ENCODE measurements at regions of chr9 and their contacts with region 1.

Region 1: GRCh38 chr9:112174218-112174964 is 706 bp downstream of the SUSD1 start:
- DNase-seq: peak; percentile 89
- H3K4me3 Mint-ChIP-seq: peak overlapping the region; percentile 86
- H3K27ac Mint-ChIP-seq: peak overlapping the region; percentile 98
- H3K4me1 Mint-ChIP-seq: peaks cover 82% of the 10 kb centered on the region
- H3K27me3 Mint-ChIP-seq: peaks cover 7% of the 10 kb centered on the region

Region 2: DNA sequence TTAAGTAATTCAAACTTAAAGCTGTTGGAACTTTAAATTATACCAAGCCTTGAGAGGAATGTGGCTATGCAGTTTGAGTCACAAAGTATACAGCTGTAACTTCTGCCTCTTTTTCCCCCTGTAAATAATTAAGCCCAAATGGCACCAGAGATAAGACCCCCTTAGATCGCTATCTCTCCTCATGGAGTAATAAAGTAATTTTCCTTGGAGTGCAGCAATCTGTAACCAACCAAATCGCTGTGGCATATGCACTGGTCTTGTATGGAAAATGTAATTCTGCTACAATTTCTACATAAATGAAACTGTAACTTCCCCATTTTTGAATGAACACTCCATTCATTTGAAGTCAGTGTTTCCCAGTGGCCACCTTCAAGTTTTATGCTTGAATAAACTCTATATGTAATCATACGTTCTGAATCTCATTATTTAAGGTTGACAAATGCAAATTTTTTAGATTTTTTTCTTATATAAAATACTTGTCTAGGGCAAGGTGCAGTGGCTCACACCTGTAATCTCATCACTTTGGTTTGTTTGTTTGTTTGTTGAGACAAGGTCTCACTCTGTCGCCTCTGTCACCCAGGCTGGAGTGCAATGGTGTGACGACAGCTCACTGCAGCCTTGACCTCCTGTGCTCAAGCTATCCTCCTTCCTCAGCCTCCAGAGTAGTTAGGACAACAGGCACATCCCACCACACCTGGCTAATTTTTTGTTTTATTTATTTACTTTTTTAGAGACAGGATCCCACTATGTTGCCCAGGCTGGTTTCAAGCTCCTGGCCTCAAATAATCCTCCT is 11.6 kb before region 1 on chr9:
- CTCF ChIA-PET with region 1: interaction called, 3 read pairs
- POLR2A ChIA-PET with region 1: interaction called, 15 read pairs
- DNase-seq: no peak
- H3K4me3 Mint-ChIP-seq: no peak overlapping the region
- H3K27ac Mint-ChIP-seq: no peak overlapping the region
- H3K4me1 Mint-ChIP-seq: peaks cover 19% of the 10 kb centered on the region
- H3K27me3 Mint-ChIP-seq: no peaks in the 10 kb centered on the region

Region 3: GRCh38 chr9:112207451-112207850 is 33.1 kb after region 1 on chr9:
- CTCF ChIA-PET with region 1: no interaction called
- POLR2A ChIA-PET with region 1: no interaction called
- DNase-seq: no peak
- H3K4me3 Mint-ChIP-seq: no peak overlapping the region
- H3K27ac Mint-ChIP-seq: no peak overlapping the region
- H3K4me1 Mint-ChIP-seq: no peaks in the 10 kb centered on the region
- H3K27me3 Mint-ChIP-seq: no peaks in the 10 kb centered on the region

Region 4: DNA sequence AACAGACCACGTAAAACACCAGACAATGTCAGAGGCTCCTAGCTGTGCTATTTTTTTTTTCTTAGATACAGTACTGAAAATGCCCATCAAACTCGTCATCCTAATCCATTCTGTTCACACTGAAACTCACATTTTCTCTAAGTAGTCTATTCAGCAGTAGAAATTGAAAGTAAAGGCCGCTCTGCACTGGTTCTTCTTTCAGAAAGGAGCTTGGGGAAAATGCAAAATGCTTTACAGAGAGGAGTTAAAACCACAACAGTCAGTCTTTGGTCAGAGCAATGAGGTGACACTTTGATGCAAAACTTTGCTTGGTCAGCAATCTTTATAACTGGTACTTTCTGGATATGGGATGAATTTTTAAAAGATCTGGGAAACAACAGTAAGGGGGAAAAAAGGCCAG is 44.5 kb after region 1 on chr9:
- CTCF ChIA-PET with region 1: interaction called, 3 read pairs
- POLR2A ChIA-PET with region 1: interaction called, 17 read pairs
- DNase-seq: peak; percentile 21
- H3K4me3 Mint-ChIP-seq: peak overlapping the region; percentile 25
- H3K27ac Mint-ChIP-seq: peak overlapping the region; percentile 61
- H3K4me1 Mint-ChIP-seq: peaks cover 34% of the 10 kb centered on the region
- H3K27me3 Mint-ChIP-seq: no peaks in the 10 kb centered on the region